GM18951 (cell line): ENCODE measurements at regions of chr22 and their contacts with region 1.

Region 1: DNA sequence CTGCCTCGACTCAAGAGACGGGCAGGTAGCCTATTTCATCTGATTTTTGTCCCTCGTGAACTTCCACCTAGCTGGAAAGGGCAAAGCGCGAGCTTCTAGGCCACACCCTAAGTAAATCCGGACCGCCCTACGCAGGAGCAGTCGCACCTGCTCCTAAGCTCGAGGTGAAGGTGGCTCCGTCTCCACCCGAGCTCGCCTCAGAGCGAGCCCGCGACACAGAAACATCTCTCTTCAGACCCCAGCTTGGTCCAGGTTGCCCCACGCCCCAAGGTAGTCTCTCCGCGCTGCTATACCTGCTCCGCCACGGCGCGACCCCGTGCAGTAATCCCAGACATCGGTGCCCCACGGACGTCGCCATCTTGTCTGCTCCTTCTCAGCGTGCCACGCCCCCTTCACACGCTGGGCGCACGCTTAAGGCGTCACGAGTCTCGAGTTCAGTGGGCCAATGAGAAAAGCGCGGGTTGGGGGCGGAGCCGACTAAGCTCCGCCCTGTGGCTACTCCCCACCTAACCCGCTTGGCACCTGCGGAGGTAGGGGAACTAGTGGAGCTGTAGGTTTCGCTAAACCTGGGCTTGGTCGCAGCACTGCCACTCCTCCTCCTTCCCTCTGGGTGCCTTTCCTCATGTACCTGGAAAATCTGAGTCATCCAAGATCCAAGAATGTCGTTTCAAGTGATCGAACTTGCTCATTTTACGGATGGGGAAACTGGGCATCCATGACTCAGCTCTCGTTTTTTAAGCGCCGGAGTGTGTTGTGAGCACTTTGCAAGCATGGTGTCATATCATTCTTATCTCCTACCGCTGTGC is at the start of gene PISD:
- POLR2A ChIP-seq: peak; percentile 78

Region 2: DNA sequence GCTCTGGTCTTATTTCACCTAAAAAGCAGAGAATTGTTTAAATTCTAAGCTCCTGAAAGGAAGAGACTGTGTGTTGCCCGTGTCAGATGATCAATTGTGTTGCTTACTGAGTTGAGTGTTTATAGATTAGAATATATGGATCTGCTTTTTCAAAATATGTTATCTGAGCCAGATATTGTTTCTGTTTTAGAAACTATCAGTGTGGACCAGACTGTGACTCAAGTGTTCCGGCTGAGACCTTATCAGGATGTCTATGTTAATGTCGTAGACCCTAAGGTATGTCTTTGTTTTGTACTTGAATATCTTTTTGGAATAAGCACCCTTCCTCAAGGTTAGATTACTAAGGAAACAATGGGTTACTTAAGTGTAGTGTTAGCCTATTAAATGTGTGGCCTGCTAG is 102.7 kb after region 1 on chr22:
- in situ Hi-C with region 1: no loop called
- POLR2A ChIP-seq: no peak

Region 3: GRCh38 chr22:31952459-31952858 is 290.4 kb after region 1 on chr22:
- in situ Hi-C with region 1: loop called (anchors 10 kb)
- POLR2A ChIP-seq: no peak

Region 4: GRCh38 chr22:31995046-31995445 is 333.0 kb after region 1 on chr22:
- in situ Hi-C with region 1: no loop called
- POLR2A ChIP-seq: no peak

Region 5: GRCh38 chr22:32020117-32020516 is 358.1 kb after region 1 on chr22:
- in situ Hi-C with region 1: no loop called
- POLR2A ChIP-seq: no peak